ENCODE measurements at regions of chr16 and their contacts with region 1.

Region 1: DNA sequence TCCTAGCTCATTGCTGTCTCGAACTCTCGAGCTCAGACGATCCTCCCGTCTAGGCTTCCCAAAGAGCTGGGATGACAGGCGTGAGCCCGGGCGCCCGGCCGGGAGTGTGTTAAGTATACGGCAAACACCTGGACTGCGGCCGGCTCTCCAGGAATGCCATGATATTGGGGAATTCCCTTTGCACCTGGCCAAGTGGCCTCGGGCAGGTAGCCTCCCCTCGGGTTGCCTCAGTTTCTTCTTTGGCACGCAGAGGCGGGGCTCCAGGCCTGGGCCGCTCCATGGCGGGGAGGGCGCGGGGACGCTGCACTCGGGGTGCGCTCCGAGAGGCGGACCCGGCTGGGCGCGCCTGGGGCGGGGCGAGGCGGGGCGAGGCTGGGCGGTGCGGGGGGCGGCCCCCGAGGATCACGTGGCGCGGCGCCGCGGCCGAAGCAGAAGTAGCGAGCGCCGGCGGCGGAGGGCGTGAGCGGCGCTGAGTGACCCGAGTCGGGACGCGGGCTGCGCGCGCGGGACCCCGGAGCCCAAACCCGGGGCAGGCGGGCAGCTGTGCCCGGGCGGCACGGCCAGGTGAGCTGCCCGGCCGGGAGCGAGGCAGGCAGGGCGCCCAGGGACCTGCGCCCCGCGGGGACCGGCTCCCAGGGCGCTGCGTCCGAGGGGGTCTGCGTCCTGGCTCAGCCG is at the start of gene PLCG2:
- DNase-seq: peak; percentile 92
- ATAC-seq: peak; percentile 83
- H3K4me3 Mint-ChIP-seq: peak within 1 kb of the TSS; percentile 97
- H3K27ac Mint-ChIP-seq: peak within 1 kb of the TSS; percentile 91
- H3K4me1 Mint-ChIP-seq: peaks cover 71% of the 10 kb centered on the region
- H3K27me3 Mint-ChIP-seq: no peaks in the 10 kb centered on the region
- CTCF ChIP-seq: no peak
- total RNA-seq, gene PLCG2: 449 and 525 TPM in 2 replicates

Region 2: GRCh38 chr16:79997257-79997656 is 1781.7 kb before region 1 on chr16:
- CTCF ChIA-PET with region 1: no interaction called
- POLR2A ChIA-PET with region 1: interaction called, 10 read pairs
- intact Hi-C with region 1: no loop called
- DNase-seq: no peak
- ATAC-seq: no peak
- H3K4me3 Mint-ChIP-seq: no peak overlapping the region
- H3K27ac Mint-ChIP-seq: no peak overlapping the region
- H3K4me1 Mint-ChIP-seq: no peaks in the 10 kb centered on the region
- H3K27me3 Mint-ChIP-seq: no peaks in the 10 kb centered on the region
- CTCF ChIP-seq: no peak

Region 3: DNA sequence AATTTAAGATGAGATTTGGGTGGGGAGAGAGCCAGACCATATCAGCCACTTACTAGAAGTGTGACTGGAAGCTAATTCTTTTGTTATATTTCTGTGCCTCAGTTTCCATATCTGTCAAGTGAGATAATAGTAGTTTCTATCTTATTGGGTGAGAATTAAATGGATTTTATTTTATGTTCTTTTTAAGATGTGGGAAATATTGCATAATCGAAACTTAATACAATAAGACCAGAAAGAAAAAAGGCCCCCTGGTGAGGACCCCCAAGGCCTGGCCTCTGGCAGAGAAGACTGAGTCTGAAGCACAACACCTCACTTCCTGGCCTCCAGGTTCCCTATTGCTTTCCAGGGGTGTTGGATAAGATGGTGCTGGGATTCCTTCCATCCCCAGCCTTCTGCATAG is 13.8 kb after region 1 on chr16:
- CTCF ChIA-PET with region 1: interaction called, 3 read pairs
- POLR2A ChIA-PET with region 1: interaction called, 34 read pairs
- intact Hi-C with region 1: loop called (anchors 1 kb)
- DNase-seq: no peak
- ATAC-seq: no peak
- H3K4me3 Mint-ChIP-seq: no peak overlapping the region
- H3K27ac Mint-ChIP-seq: peak overlapping the region; percentile 70
- H3K4me1 Mint-ChIP-seq: peaks cover 92% of the 10 kb centered on the region
- H3K27me3 Mint-ChIP-seq: no peaks in the 10 kb centered on the region
- CTCF ChIP-seq: no peak

Region 4: DNA sequence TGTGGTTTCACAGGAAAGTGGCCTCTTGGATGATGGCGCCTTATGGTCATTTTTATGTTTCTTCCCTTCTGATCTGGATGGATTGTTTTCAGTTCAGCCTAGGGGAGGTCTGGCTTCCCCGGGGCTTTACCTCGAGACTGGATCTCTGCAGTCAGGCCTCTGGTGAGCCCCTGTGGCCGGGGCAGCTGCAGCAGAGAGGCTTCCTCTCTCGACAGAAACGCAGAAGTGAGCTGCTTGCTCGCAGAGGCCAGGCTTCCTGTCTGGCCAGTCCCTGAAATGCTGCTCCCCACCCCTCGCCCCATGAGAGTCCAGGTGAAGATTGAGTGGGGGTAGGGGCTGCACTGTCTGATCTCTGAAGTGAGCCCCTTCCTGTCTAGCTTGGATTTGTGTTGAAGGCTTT is 44.1 kb after region 1 on chr16:
- CTCF ChIA-PET with region 1: interaction called, 10 read pairs
- POLR2A ChIA-PET with region 1: interaction called, 52 read pairs
- intact Hi-C with region 1: loop called (anchors 5 kb)
- DNase-seq: peak; percentile 67
- ATAC-seq: peak; percentile 65
- H3K4me3 Mint-ChIP-seq: peak overlapping the region; percentile 80
- H3K27ac Mint-ChIP-seq: peak overlapping the region; percentile 97
- H3K4me1 Mint-ChIP-seq: peaks cover 99% of the 10 kb centered on the region
- H3K27me3 Mint-ChIP-seq: no peaks in the 10 kb centered on the region
- CTCF ChIP-seq: no peak

Region 5: GRCh38 chr16:81838794-81839193 is 59.8 kb after region 1 on chr16:
- CTCF ChIA-PET with region 1: interaction called, 4 read pairs
- POLR2A ChIA-PET with region 1: interaction called, 10 read pairs
- intact Hi-C with region 1: no loop called
- DNase-seq: no peak
- ATAC-seq: peak; percentile 38
- H3K4me3 Mint-ChIP-seq: peak overlapping the region; percentile 73
- H3K27ac Mint-ChIP-seq: peak overlapping the region; percentile 93
- H3K4me1 Mint-ChIP-seq: peaks cover 96% of the 10 kb centered on the region
- H3K27me3 Mint-ChIP-seq: no peaks in the 10 kb centered on the region
- CTCF ChIP-seq: no peak

Region 6: GRCh38 chr16:81855552-81856153 is 76.7 kb after region 1 on chr16:
- CTCF ChIA-PET with region 1: no interaction called
- POLR2A ChIA-PET with region 1: no interaction called
- intact Hi-C with region 1: no loop called
- DNase-seq: no peak
- ATAC-seq: no peak
- H3K4me3 Mint-ChIP-seq: no peak overlapping the region
- H3K27ac Mint-ChIP-seq: peak overlapping the region; percentile 71
- H3K4me1 Mint-ChIP-seq: peaks cover 64% of the 10 kb centered on the region
- H3K27me3 Mint-ChIP-seq: no peaks in the 10 kb centered on the region
- CTCF ChIP-seq: no peak